Cardiac septum (tissue), 1 donor: ENCODE measurements at regions of chr11 and their contacts with region 1.

Region 1: GRCh38 chr11:130390071-130390758 is 38.2 kb downstream of the ADAMTS8 start:
- DNase-seq: no peak

Region 2: GRCh38 chr11:130213143-130213978 is 176.9 kb before region 1 on chr11:
- intact Hi-C with region 1: loop called (anchors 5 kb)
- DNase-seq: peak; percentile 89

Region 3: DNA sequence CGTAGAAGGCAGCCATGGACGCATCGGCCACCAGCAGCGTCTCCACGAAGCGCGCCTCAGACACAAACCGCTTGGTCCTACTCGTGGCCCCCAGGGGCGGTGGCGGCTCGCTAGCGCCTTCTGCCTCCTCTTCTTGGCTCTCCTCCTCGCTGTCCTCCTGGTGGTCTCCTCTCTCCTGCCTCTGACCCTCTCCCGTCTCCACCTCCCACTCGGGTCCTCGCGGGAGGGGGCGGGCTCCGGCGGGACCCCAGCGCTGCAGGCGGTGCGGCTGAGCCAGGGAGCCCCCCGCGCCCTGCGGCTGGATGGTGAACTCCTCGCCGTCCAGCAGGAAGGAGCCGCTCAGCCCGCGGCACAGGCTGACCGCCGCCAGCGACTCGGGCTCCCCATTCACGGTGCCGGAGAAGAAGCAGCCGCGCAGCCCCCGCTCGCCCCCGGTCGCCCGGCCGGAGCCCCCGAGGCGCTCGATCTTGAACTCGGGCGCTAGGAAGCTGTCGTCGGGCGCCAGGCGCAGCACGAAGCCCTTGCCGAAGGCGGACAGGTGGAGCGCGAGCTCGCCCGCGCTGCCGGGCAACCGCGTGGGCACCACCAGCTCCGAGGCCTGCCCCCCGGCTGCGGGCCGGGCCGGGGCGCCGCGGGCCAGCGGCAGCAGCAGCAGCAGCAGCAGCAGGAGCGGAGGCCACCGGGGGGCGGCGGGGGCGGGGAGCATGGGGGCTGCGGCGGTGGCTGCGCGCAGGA is 37.5 kb after region 1 on chr11:
- intact Hi-C with region 1: loop called (anchors 2 kb)
- DNase-seq: no peak

Region 4: GRCh38 chr11:130499828-130500227 is 109.6 kb after region 1 on chr11:
- intact Hi-C with region 1: no loop called
- DNase-seq: no peak